A673 (cell line): ENCODE measurements at regions of chr21 and their contacts with region 1.

Region 1: GRCh38 chr21:33360881-33361602 is 36.3 kb downstream of the IFNAR1 start:
- DNase-seq: peak; percentile 76
- H3K4me3 ChIP-seq: peak overlapping the region; percentile 31
- H3K27ac ChIP-seq: no peak overlapping the region
- H3K4me1 ChIP-seq: peaks cover 15% of the 10 kb centered on the region
- H3K27me3 ChIP-seq: no peaks in the 10 kb centered on the region
- CTCF ChIP-seq: peak; percentile 94

Region 2: GRCh38 chr21:32753818-32754610 is 607.0 kb before region 1 on chr21:
- CTCF ChIA-PET with region 1: no interaction called
- POLR2A ChIA-PET with region 1: no interaction called
- intact Hi-C with region 1: no loop called
- DNase-seq: no peak
- H3K4me3 ChIP-seq: no peak overlapping the region
- H3K27ac ChIP-seq: no peak overlapping the region
- H3K4me1 ChIP-seq: no peaks in the 10 kb centered on the region
- H3K27me3 ChIP-seq: no peaks in the 10 kb centered on the region
- CTCF ChIP-seq: no peak

Region 3: DNA sequence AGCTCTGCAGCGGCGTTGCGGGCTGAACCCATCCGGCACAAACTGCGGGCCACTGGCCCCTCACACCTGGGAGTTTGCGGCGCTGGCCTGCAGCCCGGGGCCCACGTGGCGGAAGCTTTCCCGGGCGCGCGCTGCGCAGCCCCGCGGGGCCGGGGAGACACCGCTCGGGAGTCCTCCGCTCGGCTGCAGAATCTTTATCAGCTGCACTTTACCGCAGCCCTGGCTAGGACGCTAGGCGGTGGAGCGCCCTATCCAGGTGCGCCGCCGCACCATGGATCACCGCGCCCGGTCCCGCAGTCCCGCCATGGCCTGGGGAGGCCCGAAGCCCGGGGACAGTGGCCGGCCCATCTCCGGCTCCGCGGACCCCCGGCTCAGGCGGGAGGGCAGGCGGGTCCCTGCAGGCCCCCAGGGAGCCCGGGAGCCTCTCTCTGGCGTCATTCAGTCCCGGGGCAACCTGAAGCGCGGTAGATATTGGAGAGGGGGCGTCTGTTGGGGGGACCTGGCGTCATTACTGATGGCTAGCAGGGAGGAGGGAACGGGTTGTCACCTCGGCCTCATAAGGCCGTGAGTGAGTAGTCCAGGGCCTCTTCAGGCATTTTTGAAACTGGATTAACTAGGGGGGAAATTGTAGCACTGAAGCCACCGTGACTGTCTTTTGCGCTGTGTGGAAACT is 341.0 kb before region 1 on chr21:
- CTCF ChIA-PET with region 1: interaction called, 10 read pairs
- POLR2A ChIA-PET with region 1: no interaction called
- intact Hi-C with region 1: no loop called
- DNase-seq: no peak
- H3K4me3 ChIP-seq: no peak overlapping the region
- H3K27ac ChIP-seq: no peak overlapping the region
- H3K4me1 ChIP-seq: no peaks in the 10 kb centered on the region
- H3K27me3 ChIP-seq: peaks cover 99% of the 10 kb centered on the region
- CTCF ChIP-seq: no peak

Region 4: GRCh38 chr21:33199516-33200217 is 161.4 kb before region 1 on chr21:
- CTCF ChIA-PET with region 1: interaction called, 18 read pairs
- POLR2A ChIA-PET with region 1: no interaction called
- intact Hi-C with region 1: loop called (anchors 5 kb)
- DNase-seq: peak; percentile 92
- H3K4me3 ChIP-seq: no peak overlapping the region
- H3K27ac ChIP-seq: no peak overlapping the region
- H3K4me1 ChIP-seq: no peaks in the 10 kb centered on the region
- H3K27me3 ChIP-seq: no peaks in the 10 kb centered on the region
- CTCF ChIP-seq: peak; percentile 81

Region 5: GRCh38 chr21:33261635-33262034 is 99.4 kb before region 1 on chr21:
- CTCF ChIA-PET with region 1: no interaction called
- POLR2A ChIA-PET with region 1: no interaction called
- intact Hi-C with region 1: no loop called
- DNase-seq: no peak
- H3K4me3 ChIP-seq: no peak overlapping the region
- H3K27ac ChIP-seq: no peak overlapping the region
- H3K4me1 ChIP-seq: no peaks in the 10 kb centered on the region
- H3K27me3 ChIP-seq: no peaks in the 10 kb centered on the region
- CTCF ChIP-seq: no peak

Region 6: DNA sequence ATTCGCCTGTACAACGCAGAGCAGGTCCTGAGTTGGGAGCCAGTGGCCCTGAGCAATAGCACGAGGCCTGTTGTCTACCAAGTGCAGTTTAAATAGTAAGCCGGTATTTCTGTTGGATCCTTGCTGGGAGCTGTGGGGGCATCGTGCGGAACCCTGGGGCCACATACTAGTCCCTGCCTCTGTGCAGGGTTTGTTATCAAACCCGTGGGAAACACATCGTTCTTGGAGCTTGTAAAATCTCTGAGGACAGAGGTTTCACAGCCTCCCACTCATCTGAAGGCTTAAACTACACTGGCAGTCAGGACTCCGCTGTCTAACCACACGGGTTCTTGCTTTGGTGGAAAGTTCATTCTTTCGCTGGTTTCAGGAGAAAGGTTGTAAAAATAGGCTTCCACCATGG is 53.9 kb after region 1 on chr21:
- CTCF ChIA-PET with region 1: interaction called, 17 read pairs
- POLR2A ChIA-PET with region 1: no interaction called
- intact Hi-C with region 1: no loop called
- DNase-seq: no peak
- H3K4me3 ChIP-seq: no peak overlapping the region
- H3K27ac ChIP-seq: no peak overlapping the region
- H3K4me1 ChIP-seq: no peaks in the 10 kb centered on the region
- H3K27me3 ChIP-seq: no peaks in the 10 kb centered on the region
- CTCF ChIP-seq: no peak